A549 (cell line): ENCODE measurements at regions of chr1 and their contacts with region 1.

Region 1: DNA sequence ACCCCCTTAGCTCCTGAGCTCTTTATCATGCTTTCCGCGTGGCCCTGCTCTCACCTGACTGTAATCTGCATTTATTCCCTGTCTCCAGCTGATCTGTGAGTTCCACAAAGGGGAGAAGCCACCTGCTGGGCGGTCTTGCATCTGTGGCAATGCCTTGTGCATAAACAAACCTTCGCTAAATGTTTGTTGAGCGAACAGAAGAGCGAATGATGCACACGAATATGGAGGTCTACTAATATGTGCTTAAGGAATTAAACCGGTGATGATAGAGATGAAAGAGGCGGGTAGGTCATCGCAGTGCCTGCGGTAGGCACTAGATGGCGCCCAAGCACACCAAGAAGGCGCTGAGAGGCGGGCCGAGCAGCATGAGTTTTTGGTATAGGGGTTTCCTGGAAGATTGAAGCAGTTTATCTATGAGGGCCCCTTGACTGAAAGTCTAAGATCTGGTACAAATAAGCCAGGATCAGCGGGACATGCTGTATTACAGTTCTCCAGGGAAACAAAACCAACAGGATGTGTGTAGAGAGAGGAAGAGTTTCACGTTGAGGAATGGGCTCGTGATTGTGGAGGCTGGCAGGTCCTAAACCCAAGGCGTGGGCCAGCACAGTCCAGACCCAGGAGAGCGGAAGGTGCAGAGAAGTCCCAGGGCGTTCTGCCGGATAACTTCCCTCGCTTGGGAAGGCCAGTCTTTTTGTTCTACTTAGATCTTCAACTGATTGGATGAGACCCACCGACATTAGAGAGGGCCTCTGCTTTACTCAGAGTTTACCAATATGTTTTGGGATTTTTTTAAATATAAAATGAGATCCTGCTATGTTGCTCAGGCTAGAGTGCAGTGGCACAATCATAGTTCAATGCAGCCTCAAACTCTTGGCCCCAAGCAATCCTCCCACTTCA is 34.7 kb downstream of the TOMM20 start:
- DNase-seq: peak; percentile 75 to 78
- ATAC-seq: peak; percentile 81 to 88
- H3K4me3 ChIP-seq: no peak overlapping the region
- H3K27ac ChIP-seq: peak overlapping the region; percentile 11 to 69; a peak in 4 of 6 replicates
- H3K4me1 ChIP-seq: peaks cover 8% of the 10 kb centered on the region
- CTCF ChIP-seq: peak; percentile 85
- EP300 ChIP-seq: no peak
- POLR2A ChIP-seq: no peak
- RAD21 ChIP-seq: peak; percentile 61 to 76

Region 2: DNA sequence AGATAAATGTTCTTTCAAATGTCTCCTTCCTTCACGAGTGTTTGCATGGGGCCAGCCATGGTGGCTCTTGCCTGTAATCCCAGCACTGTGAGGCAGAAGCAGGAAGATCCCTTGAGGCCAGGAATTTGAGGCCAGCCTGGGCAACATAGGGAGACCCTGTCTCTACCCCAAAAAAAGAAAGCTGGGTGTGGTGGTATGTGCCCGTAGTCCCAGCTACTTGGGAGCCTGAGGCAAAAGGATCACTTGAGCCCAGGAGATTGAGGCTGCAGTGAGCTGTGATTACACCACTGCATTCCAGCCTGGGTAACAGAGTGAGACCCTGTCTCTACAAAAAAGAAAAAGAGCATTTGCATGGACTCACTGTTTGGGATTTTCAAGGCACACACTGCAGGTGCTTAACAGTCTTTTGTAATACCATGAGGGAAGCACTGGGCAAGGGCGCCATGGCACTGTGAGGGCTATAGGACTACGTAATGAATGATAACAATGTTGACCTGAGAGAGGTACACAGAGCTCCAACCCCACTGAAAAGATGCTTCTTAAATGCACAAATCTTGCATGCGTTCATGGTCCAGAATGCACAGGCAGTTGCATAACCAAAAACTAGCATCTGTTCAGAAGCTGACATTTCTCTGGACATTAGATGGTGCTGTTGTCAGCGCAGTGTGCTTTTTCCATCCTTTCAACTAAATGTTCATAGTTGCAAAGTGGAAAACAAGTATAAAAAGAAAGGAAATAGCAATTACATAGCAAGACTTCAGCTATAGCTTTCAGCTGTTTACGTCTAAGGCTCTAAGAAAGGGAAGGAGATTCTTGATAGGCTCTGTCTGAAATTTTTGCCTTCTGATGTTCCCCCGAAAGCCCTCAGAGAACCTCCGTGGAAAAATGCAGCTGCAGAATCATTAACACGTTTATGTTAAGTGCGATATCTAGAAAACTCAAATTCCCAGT is 607.2 kb before region 1 on chr1:
- CTCF ChIA-PET with region 1: interaction called, 40 read pairs
- POLR2A ChIA-PET with region 1: no interaction called
- DNase-seq: peak; percentile 59 to 69
- ATAC-seq: peak; percentile 84 to 86; a peak in 5 of 6 replicates
- H3K4me3 ChIP-seq: no peak overlapping the region
- H3K27ac ChIP-seq: peak overlapping the region in 1 of 2 experiments; percentile 36; a peak in 2 of 6 replicates
- H3K4me1 ChIP-seq: peaks cover 5% of the 10 kb centered on the region; the same call in 1 of the 3 replicates
- CTCF ChIP-seq: peak; percentile 75
- EP300 ChIP-seq: no peak
- POLR2A ChIP-seq: no peak
- RAD21 ChIP-seq: peak; percentile 87 to 91

Region 3: GRCh38 chr1:234533034-234533891 is 560.7 kb before region 1 on chr1:
- CTCF ChIA-PET with region 1: interaction called, 11 read pairs
- POLR2A ChIA-PET with region 1: no interaction called
- DNase-seq: no peak
- ATAC-seq: peak; percentile 40 to 51; a peak in 4 of 6 replicates
- H3K4me3 ChIP-seq: no peak overlapping the region
- H3K27ac ChIP-seq: peak overlapping the region; percentile 21 to 69; a peak in 4 of 6 replicates
- H3K4me1 ChIP-seq: peaks cover 16% of the 10 kb centered on the region
- CTCF ChIP-seq: no peak
- EP300 ChIP-seq: no peak
- POLR2A ChIP-seq: no peak
- RAD21 ChIP-seq: no peak

Region 4: DNA sequence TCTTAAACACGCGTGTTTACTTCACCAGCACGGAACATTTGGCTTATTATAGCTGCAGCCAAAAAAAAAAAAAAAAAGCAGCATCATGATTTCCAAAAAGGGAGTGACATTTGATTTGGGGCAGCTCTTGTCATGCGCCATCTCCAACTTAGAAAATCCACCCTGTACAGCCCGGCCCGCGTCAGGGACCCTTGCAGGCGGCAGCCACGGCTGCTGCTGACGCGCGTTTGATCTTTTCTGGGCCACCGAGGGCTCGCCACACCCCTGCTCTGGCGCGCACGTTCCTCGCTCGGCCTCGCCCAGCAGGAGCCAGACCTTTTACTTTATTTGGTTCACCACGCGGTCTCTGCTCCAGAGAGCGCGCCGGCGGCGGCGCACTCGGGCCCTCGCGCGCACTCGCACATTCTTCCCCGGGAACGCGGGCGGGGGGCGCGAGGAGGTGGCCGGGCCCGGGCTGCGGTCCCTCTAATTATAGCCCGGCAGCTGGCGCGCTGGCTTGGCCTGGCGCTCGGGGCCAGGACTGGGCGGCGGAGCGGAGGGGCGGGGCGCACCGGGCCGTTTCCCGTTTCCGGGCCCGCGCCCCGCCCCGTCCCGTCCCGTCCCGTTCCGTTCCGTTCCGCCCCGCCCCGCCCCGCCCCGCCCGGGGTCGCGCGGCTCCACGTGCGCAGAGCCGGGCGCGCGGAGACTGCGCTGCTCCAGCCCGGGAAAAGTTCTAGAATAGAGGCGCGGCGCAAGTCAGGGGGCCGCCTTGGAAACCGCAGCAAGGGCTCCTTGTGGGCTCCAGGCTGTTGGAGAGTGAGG is 494.1 kb before region 1 on chr1:
- CTCF ChIA-PET with region 1: interaction called, 14 read pairs
- POLR2A ChIA-PET with region 1: no interaction called
- DNase-seq: peak; percentile 65 to 87
- ATAC-seq: peak; percentile 77 to 88
- H3K4me3 ChIP-seq: peak overlapping the region; percentile 49
- H3K27ac ChIP-seq: peak overlapping the region; percentile 94 to 96
- H3K4me1 ChIP-seq: peaks cover 58% of the 10 kb centered on the region
- CTCF ChIP-seq: 0 out of 3 replicates have a peak, but pooled peaks have one; percentile 5
- EP300 ChIP-seq: no peak; a peak in 1 of 5 replicates
- POLR2A ChIP-seq: peak; percentile 34
- RAD21 ChIP-seq: peak in 1 of 2 experiments; percentile 53; a peak in 3 of 5 replicates

Region 5: DNA sequence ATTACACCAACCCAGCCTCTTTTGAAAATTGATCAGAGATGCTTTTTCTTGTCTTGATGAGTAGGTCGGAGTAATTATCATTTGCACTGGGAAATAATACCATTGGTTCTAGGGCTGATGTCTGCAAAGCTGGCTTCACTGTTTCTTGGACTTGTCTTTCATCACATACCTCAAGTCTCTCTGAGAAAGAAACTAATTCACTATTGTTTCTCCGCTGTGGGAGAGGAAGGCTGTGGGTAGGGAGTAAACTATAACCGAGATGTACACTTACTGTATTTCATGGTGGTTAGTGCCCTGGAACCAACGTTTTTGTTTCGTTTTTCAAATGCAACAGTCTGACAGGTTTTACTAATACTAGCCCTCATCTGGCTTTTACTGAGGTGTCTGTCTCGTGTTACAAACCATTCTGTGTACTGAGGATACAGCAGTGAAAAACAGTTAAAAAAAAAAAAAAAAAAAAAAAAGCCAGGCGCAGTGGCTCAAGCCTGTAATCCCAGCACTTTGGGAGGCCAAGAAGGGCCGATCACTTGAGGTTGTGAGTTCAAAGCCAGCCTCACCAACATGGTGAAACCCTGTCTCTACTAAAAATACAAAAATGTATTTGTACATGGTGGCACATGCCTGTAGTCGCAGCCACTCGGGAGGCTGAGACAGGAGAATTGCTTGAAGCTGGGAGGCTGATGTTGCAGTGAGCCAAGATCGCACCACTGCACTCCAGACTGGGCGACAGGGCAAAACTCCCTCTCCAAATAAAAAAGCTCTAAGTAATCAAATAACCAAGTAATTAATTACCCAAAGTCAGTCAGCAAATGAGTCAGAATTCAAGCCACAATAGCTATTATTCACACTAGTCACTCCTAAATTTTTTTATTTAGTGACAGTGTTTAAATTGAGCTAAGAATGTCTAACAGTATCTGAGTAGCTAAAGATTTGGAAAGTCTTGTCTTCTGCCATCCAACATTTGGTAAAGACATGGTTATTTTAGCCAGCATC is 11.4 kb after region 1 on chr1:
- CTCF ChIA-PET with region 1: interaction called, 26 read pairs
- POLR2A ChIA-PET with region 1: no interaction called
- DNase-seq: no peak
- ATAC-seq: peak; percentile 15 to 22; a peak in 4 of 6 replicates
- H3K4me3 ChIP-seq: no peak overlapping the region
- H3K27ac ChIP-seq: no peak overlapping the region; a peak in 1 of 6 replicates
- H3K4me1 ChIP-seq: peaks cover 9% of the 10 kb centered on the region; the same call in 2 of the 3 replicates
- CTCF ChIP-seq: no peak
- EP300 ChIP-seq: no peak
- POLR2A ChIP-seq: no peak
- RAD21 ChIP-seq: no peak

Region 6: GRCh38 chr1:235190431-235190830 is 96.5 kb after region 1 on chr1:
- CTCF ChIA-PET with region 1: no interaction called
- POLR2A ChIA-PET with region 1: no interaction called
- DNase-seq: no peak
- ATAC-seq: no peak
- H3K4me3 ChIP-seq: no peak overlapping the region
- H3K27ac ChIP-seq: no peak overlapping the region
- H3K4me1 ChIP-seq: no peaks in the 10 kb centered on the region
- CTCF ChIP-seq: no peak
- EP300 ChIP-seq: no peak
- POLR2A ChIP-seq: no peak
- RAD21 ChIP-seq: no peak